Sciatic nerve (tissue), 2 donors: ENCODE measurements at regions of chr5 and their contacts with region 1.

Region 1: GRCh38 chr5:113232667-113233066 is 202.1 kb downstream of the TSSK1B start:
- DNase-seq: no peak
- ATAC-seq: peak; percentile 54

Region 2: GRCh38 chr5:113283558-113283957 is 50.9 kb after region 1 on chr5:
- intact Hi-C with region 1: loop called (anchors 10 kb)
- DNase-seq: no peak
- ATAC-seq: no peak